ENCODE measurements at regions of chr3 and their contacts with region 1.

Region 1: DNA sequence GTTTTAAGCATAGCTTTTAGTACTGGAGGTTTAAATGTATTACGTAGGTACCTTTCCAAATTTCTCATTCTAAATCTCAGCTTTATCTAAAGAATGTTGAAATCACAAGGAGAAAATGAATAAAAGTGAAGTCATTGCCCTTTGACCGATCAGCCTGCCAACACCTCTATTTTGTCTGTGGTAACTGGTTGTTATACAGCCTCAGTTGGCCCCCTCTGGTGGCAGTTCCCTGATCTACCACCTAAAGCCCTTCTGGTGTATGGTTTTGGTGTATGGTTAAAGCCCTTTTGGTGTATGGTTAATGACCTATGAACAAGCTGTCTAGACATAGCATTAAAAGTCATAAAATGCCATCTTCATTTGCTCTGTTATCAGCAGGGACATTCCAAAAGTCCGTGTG is 378.2 kb upstream of the AZI2 start:
- DNase-seq: peak; percentile 44
- ATAC-seq: peak; percentile 88
- H3K4me3 ChIP-seq: no peak overlapping the region
- H3K27ac ChIP-seq: no peak overlapping the region
- H3K4me1 ChIP-seq: no peaks in the 10 kb centered on the region
- H3K27me3 ChIP-seq: no peaks in the 10 kb centered on the region
- CTCF ChIP-seq: peak; percentile 39 to 76 (median 75); a peak in 5 of 6 replicates
- POLR2A ChIP-seq: no peak
- RAD21 ChIP-seq: peak; percentile 56

Region 2: GRCh38 chr3:28476194-28476593 is 250.6 kb before region 1 on chr3:
- CTCF ChIA-PET with region 1: no interaction called
- POLR2A ChIA-PET with region 1: no interaction called
- RAD21 ChIA-PET with region 1: no interaction called
- intact Hi-C with region 1: loop called (anchors 2 kb)
- DNase-seq: peak; percentile 29
- ATAC-seq: 0 out of 2 replicates have a peak, but pooled peaks have one; percentile 44
- H3K4me3 ChIP-seq: no peak overlapping the region
- H3K27ac ChIP-seq: no peak overlapping the region
- H3K4me1 ChIP-seq: no peaks in the 10 kb centered on the region
- H3K27me3 ChIP-seq: no peaks in the 10 kb centered on the region
- CTCF ChIP-seq: peak; percentile 24 to 64 (median 62); a peak in 4 of 6 replicates
- POLR2A ChIP-seq: no peak
- RAD21 ChIP-seq: peak; percentile 58

Region 3: DNA sequence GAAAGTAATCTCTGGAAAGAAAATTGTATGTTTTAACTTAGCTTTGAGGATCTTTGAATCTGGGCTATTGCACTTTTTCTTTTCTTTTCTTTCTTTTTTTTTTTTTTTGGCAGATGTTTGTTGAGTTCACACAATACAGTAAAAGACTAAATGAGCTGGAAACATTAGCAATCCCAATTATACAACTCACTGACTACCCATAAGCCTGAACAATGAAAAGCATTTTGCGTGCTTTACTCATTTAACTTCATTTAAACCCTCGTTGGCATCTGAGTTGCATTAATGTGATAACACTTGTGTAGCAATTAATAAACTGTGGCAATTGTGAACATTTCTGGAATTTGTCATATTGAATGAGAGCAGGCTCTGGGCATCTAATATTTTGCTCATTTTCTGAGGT is 284.6 kb after region 1 on chr3:
- CTCF ChIA-PET with region 1: no interaction called
- POLR2A ChIA-PET with region 1: no interaction called
- RAD21 ChIA-PET with region 1: no interaction called
- intact Hi-C with region 1: no loop called
- DNase-seq: no peak
- ATAC-seq: no peak
- H3K4me3 ChIP-seq: no peak overlapping the region
- H3K27ac ChIP-seq: no peak overlapping the region
- H3K4me1 ChIP-seq: no peaks in the 10 kb centered on the region
- H3K27me3 ChIP-seq: no peaks in the 10 kb centered on the region
- CTCF ChIP-seq: no peak
- POLR2A ChIP-seq: no peak
- RAD21 ChIP-seq: no peak